ENCODE measurements at regions of chr5 and their contacts with region 1.

Region 1: DNA sequence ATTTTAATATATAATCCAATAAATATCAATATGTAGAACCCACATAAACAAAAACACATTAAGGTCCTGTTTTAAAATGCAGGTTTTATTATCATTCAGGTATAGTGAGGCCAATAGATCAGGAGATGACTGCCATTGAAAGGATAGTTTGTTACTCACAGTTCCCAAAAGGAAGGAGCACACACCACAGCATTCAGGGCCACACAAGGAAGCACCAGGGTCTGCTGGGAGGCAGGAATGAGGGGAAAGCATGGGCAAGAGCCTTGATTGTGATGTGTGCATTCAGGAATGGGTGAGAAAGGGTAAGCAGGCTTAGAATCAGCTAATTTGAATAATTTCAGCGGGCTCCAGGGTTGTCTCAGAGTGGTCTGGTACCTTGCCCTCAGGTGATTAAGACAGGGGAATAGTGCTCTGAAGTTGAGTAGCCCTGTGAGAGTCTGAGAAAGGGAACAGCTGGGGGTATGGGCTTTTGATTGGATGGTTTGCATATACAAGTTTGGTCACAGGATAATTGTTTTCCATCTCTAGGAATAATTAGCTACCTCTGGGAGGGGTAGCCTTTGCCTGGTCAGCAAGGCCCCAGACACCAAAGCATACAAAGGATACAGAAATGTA is 19.8 kb upstream of the OTULIN start:
- DNase-seq: no peak
- ATAC-seq: no peak
- H3K4me3 ChIP-seq: no peak overlapping the region
- H3K27ac ChIP-seq: no peak overlapping the region
- H3K4me1 ChIP-seq: peaks cover 0 to 5% (median 0%) of the 10 kb centered on the region in 9 donors
- H3K27me3 ChIP-seq: peaks cover 0 to 25% (median 6%) of the 10 kb centered on the region in 7 donors
- CTCF ChIP-seq: no peak

Region 2: DNA sequence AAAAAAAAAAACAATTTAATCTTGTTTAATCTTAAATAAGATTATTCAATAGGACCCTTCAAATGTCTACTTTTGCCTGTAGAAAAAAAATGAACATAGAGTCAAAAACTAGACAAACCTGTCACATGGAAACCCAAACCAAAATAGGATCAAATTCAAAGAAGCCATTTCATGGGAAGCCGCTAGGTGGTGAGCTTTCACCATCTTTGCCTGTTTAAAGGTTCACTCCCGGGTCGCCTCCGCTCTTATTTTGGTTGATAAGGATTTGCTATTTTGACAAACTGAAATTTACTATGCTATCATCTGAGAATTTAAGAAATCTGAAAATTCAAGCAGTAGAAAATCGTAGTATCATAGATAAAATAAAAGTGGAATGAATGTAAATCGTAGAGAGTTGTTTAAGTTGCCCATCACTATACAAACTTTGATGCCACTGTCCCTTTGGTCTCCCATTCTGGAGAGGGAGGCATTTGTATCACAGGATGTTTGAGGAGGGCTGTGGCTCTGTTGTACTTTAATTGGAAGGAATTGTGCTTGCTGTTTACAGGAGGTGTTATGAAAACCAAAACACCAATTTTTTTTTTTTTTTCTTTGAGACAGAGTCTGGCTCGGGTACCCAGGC is 656.8 kb before region 1 on chr5:
- intact Hi-C with region 1: loop called in 8 of 10 experiments (anchors 2 to 10 kb)
- DNase-seq: peak in 1 of 2 donors; percentile 38
- ATAC-seq: peak in 7 of 8 donors; percentile 20 to 79 (median 71)
- H3K4me3 ChIP-seq: no peak overlapping the region
- H3K27ac ChIP-seq: no peak overlapping the region
- H3K4me1 ChIP-seq: peaks cover 0 to 3% (median 0%) of the 10 kb centered on the region in 9 donors
- H3K27me3 ChIP-seq: peaks cover 0 to 13% (median 3%) of the 10 kb centered on the region in 7 donors
- CTCF ChIP-seq: peak; percentile 61 to 92 (median 82)

Region 3: GRCh38 chr5:14351845-14352712 is 292.7 kb before region 1 on chr5:
- intact Hi-C with region 1: loop called in 4 of 10 experiments (anchors 2 to 10 kb)
- DNase-seq: peak; percentile 59 to 64
- ATAC-seq: peak; percentile 80 to 93 (median 87)
- H3K4me3 ChIP-seq: no peak overlapping the region
- H3K27ac ChIP-seq: no peak overlapping the region
- H3K4me1 ChIP-seq: peaks cover 7 to 45% (median 10%) of the 10 kb centered on the region in 9 donors
- H3K27me3 ChIP-seq: no peaks in the 10 kb centered on the region
- CTCF ChIP-seq: peak; percentile 88 to 98 (median 96)

Region 4: GRCh38 chr5:14364576-14365472 is 279.9 kb before region 1 on chr5:
- intact Hi-C with region 1: loop called in 1 of 10 experiments (anchors 10 kb)
- DNase-seq: no peak
- ATAC-seq: no peak
- H3K4me3 ChIP-seq: no peak overlapping the region
- H3K27ac ChIP-seq: no peak overlapping the region
- H3K4me1 ChIP-seq: peaks cover 0 to 16% (median 9%) of the 10 kb centered on the region in 9 donors
- H3K27me3 ChIP-seq: no peaks in the 10 kb centered on the region
- CTCF ChIP-seq: peak in 8 of 9 donors; percentile 29 to 62 (median 47)

Region 5: DNA sequence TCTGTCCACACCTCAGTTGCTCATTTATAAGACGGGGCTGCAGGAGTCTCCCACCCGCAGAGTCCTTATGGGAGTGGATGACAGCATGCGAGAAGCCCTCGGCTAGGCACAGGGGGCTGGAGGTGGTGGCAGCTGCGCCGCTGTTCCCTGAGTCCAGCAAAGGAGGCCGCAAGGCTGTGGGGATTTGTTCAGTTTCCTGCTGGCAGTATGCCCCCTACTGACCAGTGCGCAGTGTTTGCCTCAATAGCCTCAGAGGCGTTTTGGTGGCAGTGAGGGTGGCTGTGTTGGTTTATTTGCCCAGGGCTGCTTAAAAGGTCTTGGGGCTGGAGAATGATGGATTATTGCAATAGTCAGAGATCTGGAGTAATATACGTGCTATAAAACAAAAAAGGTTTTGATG is 239.5 kb before region 1 on chr5:
- intact Hi-C with region 1: loop called in 1 of 10 experiments (anchors 10 kb)
- DNase-seq: no peak
- ATAC-seq: no peak
- H3K4me3 ChIP-seq: no peak overlapping the region
- H3K27ac ChIP-seq: no peak overlapping the region
- H3K4me1 ChIP-seq: peaks cover 2 to 69% (median 30%) of the 10 kb centered on the region in 9 donors
- H3K27me3 ChIP-seq: no peaks in the 10 kb centered on the region
- CTCF ChIP-seq: peak in 4 of 9 donors; percentile 8 to 43 (median 31)